H1 (cell line): ENCODE measurements at regions of chr11 and their contacts with region 1.

Region 1: GRCh38 chr11:108121274-108122155 is at the start of gene ACAT1:
- DNase-seq: peak; percentile 65 to 95
- H3K4me3 ChIP-seq: peak within 1 kb of the TSS; percentile 54 to 71 (median 64)
- H3K27ac ChIP-seq: no peak within 1 kb of the TSS
- H3K4me1 ChIP-seq: peaks cover 0 to 5% (median 3%) of the 10 kb centered on the region in 4 experiments; a peak in 2 of 7 replicates
- H3K27me3 ChIP-seq: peaks cover 0 to 7% (median 3%) of the 10 kb centered on the region in 4 experiments; a peak in 3 of 7 replicates
- CTCF ChIP-seq: peak; percentile 23 to 34 (median 33); a peak in 3 of 4 replicates
- EP300 ChIP-seq: no peak
- POLR2A ChIP-seq: peak; percentile 78 to 92
- RAD21 ChIP-seq: peak in 1 of 2 experiments; percentile 29; a peak in 2 of 4 replicates
- total RNA-seq, gene ACAT1: 28.1 and 30.4 TPM in 2 replicates

Region 2: DNA sequence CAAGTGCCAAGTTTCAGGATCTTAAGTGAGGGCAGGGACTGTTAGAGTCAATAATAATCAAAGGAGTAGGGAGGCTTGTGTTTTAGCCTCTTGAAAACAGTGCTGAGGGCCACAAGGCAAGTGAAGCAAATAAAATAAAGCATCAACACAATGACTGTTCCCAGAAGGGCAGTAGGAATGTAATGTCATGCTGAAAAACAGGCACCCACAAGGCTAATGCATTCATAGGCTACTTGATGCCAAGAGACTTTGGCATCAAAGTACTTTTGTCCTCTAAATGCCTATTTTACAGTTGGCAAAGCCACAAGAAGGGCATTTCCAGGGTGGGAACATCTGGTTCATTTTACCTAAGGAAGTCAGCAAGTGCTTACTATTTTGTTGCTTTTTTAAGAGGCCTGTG is 170.4 kb before region 1 on chr11:
- CTCF ChIA-PET with region 1: no interaction called
- POLR2A ChIA-PET with region 1: no interaction called
- DNase-seq: no peak
- H3K4me3 ChIP-seq: no peak overlapping the region
- H3K27ac ChIP-seq: no peak overlapping the region
- H3K4me1 ChIP-seq: peaks cover 0 to 11% (median 1%) of the 10 kb centered on the region in 4 experiments; a peak in 5 of 7 replicates
- H3K27me3 ChIP-seq: no peaks in the 10 kb centered on the region
- CTCF ChIP-seq: no peak
- EP300 ChIP-seq: no peak
- POLR2A ChIP-seq: no peak
- RAD21 ChIP-seq: no peak

Region 3: DNA sequence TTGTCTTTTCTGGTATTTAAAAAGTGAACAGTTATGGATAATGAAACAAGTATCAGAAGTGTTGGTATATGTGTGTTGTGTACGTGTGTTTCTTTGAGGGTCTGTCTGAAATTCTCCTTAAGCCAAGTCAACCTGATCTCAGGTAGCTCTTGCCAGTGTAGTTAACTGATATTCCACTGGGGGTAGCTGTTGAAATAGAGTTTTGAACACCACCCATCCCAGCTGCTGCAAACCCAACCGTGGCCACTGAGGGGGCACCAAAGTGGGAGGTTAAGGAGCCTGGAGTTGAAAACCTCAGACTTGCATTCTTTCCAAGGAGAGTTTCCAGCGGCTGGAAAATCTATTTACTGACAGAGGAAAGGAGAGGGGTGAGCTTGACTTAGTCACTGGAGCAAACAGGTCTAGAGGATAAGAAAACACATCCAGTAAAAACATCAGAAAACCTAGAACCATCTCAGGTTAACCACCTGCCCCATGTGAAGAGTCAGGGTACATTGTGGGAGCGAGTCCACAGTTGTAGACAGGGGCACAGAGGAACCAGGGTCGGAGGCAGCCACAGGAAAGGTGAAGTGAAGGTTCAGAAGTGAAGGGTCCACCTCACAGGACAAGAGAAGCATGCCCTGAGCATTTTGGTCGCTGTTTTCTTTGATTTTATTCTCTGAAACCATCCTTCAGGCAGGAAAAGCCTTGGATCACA is 121.6 kb before region 1 on chr11:
- CTCF ChIA-PET with region 1: interaction called, 14 read pairs
- POLR2A ChIA-PET with region 1: no interaction called
- DNase-seq: peak; percentile 59 to 72
- H3K4me3 ChIP-seq: no peak overlapping the region
- H3K27ac ChIP-seq: no peak overlapping the region
- H3K4me1 ChIP-seq: no peaks in the 10 kb centered on the region
- H3K27me3 ChIP-seq: no peaks in the 10 kb centered on the region
- CTCF ChIP-seq: peak; percentile 64 to 99 (median 90)
- EP300 ChIP-seq: no peak
- POLR2A ChIP-seq: no peak
- RAD21 ChIP-seq: peak; percentile 89 to 93

Region 4: GRCh38 chr11:108101090-108101775 is 20.3 kb before region 1 on chr11:
- CTCF ChIA-PET with region 1: interaction called, 18 read pairs
- POLR2A ChIA-PET with region 1: interaction called, 4 read pairs
- DNase-seq: no peak
- H3K4me3 ChIP-seq: no peak overlapping the region
- H3K27ac ChIP-seq: no peak overlapping the region
- H3K4me1 ChIP-seq: no peaks in the 10 kb centered on the region
- H3K27me3 ChIP-seq: no peaks in the 10 kb centered on the region
- CTCF ChIP-seq: no peak
- EP300 ChIP-seq: no peak
- POLR2A ChIP-seq: no peak
- RAD21 ChIP-seq: no peak

Region 5: DNA sequence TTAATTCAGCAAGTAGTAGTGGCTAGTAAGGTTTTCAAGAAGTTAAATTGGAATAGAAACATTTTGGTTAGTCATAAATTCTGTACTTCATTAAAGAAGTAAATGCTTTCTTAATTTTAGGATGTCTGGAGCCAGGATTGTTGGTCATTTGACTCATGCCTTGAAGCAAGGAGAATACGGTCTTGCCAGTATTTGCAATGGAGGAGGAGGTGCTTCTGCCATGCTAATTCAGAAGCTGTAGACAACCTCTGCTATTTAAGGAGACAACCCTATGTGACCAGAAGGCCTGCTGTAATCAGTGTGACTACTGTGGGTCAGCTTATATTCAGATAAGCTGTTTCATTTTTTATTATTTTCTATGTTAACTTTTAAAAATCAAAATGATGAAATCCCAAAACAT is 25.6 kb after region 1 on chr11:
- CTCF ChIA-PET with region 1: interaction called, 90 read pairs
- POLR2A ChIA-PET with region 1: interaction called, 3 read pairs
- DNase-seq: no peak
- H3K4me3 ChIP-seq: no peak overlapping the region
- H3K27ac ChIP-seq: no peak overlapping the region
- H3K4me1 ChIP-seq: no peaks in the 10 kb centered on the region
- H3K27me3 ChIP-seq: no peaks in the 10 kb centered on the region
- CTCF ChIP-seq: no peak
- EP300 ChIP-seq: no peak
- POLR2A ChIP-seq: no peak
- RAD21 ChIP-seq: no peak

Region 6: DNA sequence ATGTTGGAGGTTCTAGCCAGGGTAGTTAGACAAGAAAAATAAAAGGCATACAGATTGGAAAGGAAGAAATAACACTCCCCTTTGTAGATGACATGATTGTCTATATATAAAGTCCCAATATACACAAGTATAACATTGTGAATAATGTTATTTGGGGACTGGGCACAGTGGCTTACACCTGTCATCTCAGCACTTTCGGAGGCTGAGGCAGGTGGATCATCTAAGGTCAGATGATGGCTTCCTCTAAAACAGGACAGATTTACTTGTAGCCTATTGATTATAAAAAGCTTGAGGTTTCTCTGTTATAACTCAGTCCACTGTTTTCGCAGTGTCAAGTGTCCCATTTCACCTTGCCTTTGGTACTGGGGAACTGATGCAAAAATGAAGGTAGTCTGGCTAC is 120.9 kb after region 1 on chr11:
- CTCF ChIA-PET with region 1: no interaction called
- POLR2A ChIA-PET with region 1: no interaction called
- DNase-seq: no peak
- H3K4me3 ChIP-seq: no peak overlapping the region
- H3K27ac ChIP-seq: no peak overlapping the region
- H3K4me1 ChIP-seq: no peaks in the 10 kb centered on the region
- H3K27me3 ChIP-seq: no peaks in the 10 kb centered on the region
- CTCF ChIP-seq: no peak
- EP300 ChIP-seq: no peak
- POLR2A ChIP-seq: no peak
- RAD21 ChIP-seq: no peak